ENCODE measurements at regions of chr10 and their contacts with region 1.

Region 1: GRCh38 chr10:109306698-109307097 is 616.6 kb downstream of the XPNPEP1 start:
- DNase-seq: no peak
- ATAC-seq: no peak

Region 2: GRCh38 chr10:107340326-107340725 is 1966.4 kb before region 1 on chr10:
- intact Hi-C with region 1: loop called (anchors 5 kb)
- DNase-seq: no peak
- ATAC-seq: no peak

Region 3: GRCh38 chr10:109126016-109126415 is 180.7 kb before region 1 on chr10:
- intact Hi-C with region 1: no loop called
- DNase-seq: no peak
- ATAC-seq: no peak

Region 4: GRCh38 chr10:109159351-109159750 is 147.3 kb before region 1 on chr10:
- intact Hi-C with region 1: no loop called
- DNase-seq: no peak
- ATAC-seq: no peak

Measured in sciatic nerve (tissue), 2 donors.